ENCODE measurements at regions of chr4 and their contacts with region 1.

Region 1: DNA sequence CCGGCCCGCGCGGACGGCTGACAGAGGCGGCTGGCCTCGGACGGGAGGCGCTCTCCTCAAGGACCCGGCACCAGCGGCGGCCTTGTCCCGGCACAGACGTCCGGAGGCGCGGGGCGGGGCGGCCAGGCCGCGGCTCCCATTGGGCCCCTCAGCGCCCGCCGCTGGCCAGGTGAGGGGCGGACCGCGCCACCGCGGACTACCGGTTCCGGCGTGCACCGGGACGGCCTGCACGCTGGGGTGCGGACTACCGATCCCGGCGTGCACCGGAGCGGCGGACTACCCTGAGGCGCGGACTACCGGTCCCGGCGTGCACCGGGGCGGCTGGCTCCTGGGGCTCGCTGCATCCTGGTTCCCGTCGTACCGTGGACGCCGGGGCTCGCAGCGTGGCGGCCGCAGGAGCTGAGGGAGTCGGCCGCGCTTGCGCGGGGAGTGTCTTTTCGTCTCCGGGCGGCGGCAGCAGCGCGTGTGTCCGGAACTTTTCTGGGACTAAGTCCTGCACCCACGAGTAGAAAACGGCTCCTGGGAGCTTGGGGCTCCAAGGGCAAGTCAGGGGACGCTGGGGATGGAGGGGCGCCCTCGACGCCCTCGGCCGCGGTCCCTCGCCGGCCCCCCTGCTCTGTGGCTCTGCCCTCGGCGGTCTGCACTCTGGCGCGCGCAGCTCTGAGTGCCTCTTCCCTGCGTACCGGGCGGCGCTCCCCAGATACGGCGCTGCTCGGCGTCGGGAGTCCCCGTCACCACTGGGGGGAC is at the start of gene LETM1:
- DNase-seq: peak; percentile 68 to 94
- ATAC-seq: peak; percentile 95 to 97
- H3K4me3 ChIP-seq: peak within 1 kb of the TSS; percentile 99
- H3K27ac ChIP-seq: peak within 1 kb of the TSS; percentile 97 to 98
- H3K4me1 ChIP-seq: peaks cover 36% of the 10 kb centered on the region
- CTCF ChIP-seq: no peak
- EP300 ChIP-seq: no peak
- POLR2A ChIP-seq: peak; percentile 82
- RAD21 ChIP-seq: no peak
- polyA plus RNA-seq, gene LETM1: 18.6 and 20.2 TPM in 2 replicates

Region 2: DNA sequence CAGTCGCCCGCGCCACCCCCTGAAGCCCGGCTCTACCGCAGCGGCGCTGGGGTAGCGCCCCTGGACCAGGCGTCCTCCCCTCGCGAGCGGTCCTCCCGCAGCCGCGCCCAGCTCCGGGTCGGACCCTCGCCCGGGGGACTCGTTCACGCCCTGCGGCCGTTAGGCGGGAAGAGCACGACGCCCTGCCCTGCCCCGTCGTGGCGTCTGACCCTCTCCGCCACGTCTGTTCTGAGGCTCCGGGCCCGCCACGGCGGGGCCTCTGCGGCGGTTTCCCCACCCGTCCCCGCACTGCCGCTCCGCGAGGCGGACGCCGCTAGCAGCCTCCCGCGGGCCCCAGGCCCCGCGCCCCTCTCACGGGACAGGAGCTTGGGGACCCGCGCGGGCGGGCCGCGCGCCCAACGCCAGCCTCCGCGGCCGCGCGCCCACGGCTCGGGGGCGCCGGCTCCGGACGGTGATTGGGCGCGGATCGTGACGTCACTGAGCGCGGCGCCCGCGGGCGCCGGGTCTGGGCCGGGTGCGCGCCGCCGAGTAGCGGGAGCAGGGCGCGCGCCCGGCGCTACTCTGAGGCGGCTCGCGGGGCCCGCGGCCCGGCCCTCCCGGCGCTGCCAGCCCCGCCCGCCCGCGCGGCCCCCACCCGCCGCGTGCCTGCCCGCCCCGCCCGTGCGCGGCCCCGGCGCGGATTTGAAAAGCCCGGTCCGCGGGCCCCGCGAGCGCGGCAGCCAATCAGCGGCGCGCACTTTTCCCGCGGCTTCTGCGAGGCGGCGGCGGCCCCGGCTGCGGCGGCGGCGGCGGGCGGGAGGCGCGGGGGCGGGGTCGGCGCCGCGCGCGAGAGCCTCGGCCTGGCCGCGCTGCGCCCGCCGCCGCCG is 14.6 kb after region 1 on chr4 and contains the start of gene NSD2:
- CTCF ChIA-PET with region 1: interaction called, 4 read pairs
- POLR2A ChIA-PET with region 1: interaction called, 18 read pairs
- DNase-seq: peak; percentile 81 to 83
- ATAC-seq: peak; percentile 70 to 74
- H3K4me3 ChIP-seq: peak within 1 kb of the TSS; percentile 85
- H3K27ac ChIP-seq: peak within 1 kb of the TSS; percentile 100
- H3K4me1 ChIP-seq: peaks cover 43% of the 10 kb centered on the region
- CTCF ChIP-seq: no peak
- EP300 ChIP-seq: no peak
- POLR2A ChIP-seq: peak; percentile 42
- RAD21 ChIP-seq: no peak
- polyA plus RNA-seq, gene NSD2: 49.3 and 52.6 TPM in 2 replicates

Measured in A549 (cell line).